Activated CD8-positive, alpha-beta T cell treated with anti-CD3 and anti-CD28 coated beads, Interleukin-2, amount 10 ng/mL, durations not matched to agents 7 days and 5 days (primary cell): ENCODE measurements at regions of chr11 and their contacts with region 1.

Region 1: DNA sequence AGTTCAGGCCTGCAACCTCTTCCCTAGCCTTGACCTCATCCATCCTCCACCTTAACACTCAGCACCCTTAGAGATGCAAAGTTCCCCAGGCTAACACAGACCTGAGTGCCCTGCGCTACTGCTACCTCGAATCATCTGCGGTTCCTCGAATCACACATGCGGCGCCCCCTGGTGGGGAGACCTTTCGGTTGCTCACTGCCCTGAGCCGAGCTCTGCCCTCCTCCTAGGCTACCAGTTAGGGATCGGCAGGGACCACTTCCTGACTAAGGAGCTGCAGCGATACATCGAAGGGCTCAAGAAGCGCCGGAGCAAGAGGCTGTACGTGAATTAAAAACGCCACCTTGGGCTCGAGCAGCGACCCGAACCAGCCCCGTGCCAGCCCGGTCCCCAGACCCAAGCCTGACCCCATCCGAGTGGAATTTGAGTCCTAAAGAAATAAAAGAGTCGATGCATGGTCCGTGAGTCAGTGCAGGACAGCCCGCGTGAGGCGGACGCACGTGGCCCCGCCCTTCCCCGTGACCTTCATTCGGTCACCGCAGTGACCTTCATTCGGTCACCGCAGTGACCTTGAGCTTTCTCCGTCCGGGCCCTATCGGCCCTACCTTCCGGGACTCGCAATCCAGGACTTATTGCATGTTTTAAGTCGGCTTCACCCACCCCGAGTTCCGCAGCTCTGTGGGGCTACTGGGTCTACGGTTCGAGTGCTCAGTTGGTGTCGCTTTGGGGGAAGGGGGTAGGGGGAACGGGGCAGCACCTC is 830 bp upstream of the ESRRA start:
- DNase-seq: peak; percentile 97
- ATAC-seq: peak; percentile 45
- H3K4me3 Mint-ChIP-seq: peak overlapping the region; percentile 88
- H3K27ac Mint-ChIP-seq: peak overlapping the region; percentile 99
- H3K4me1 Mint-ChIP-seq: peaks cover 52% of the 10 kb centered on the region
- H3K27me3 Mint-ChIP-seq: peaks cover 15% of the 10 kb centered on the region

Region 2: GRCh38 chr11:64185816-64186498 is 118.5 kb before region 1 on chr11 and contains the start of gene STIP1:
- CTCF ChIA-PET with region 1: interaction called, 14 read pairs
- POLR2A ChIA-PET with region 1: interaction called, 14 read pairs
- DNase-seq: peak; percentile 99
- ATAC-seq: peak; percentile 92
- H3K4me3 Mint-ChIP-seq: peak within 1 kb of the TSS; percentile 93
- H3K27ac Mint-ChIP-seq: peak within 1 kb of the TSS; percentile 98
- H3K4me1 Mint-ChIP-seq: peaks cover 53% of the 10 kb centered on the region
- H3K27me3 Mint-ChIP-seq: no peaks in the 10 kb centered on the region
- total RNA-seq, gene STIP1: 335 to 340 TPM

Region 3: GRCh38 chr11:64225612-64226506 is 78.6 kb before region 1 on chr11 and contains the starts of genes NUDT22 and TRPT1:
- CTCF ChIA-PET with region 1: interaction called, 12 read pairs
- POLR2A ChIA-PET with region 1: interaction called, 3 read pairs
- DNase-seq: peak; percentile 95
- ATAC-seq: peak; percentile 68
- H3K4me3 Mint-ChIP-seq: peak within 1 kb of the TSS; percentile 88
- H3K27ac Mint-ChIP-seq: peak within 1 kb of the TSS; percentile 91
- H3K4me1 Mint-ChIP-seq: peaks cover 42% of the 10 kb centered on the region
- H3K27me3 Mint-ChIP-seq: no peaks in the 10 kb centered on the region
- total RNA-seq, gene NUDT22: 86.7 to 91.6 TPM
- total RNA-seq, gene TRPT1: 37.8 to 44.8 TPM

Region 4: GRCh38 chr11:64246871-64247728 is 57.4 kb before region 1 on chr11 and contains the start of gene PPP1R14B:
- CTCF ChIA-PET with region 1: interaction called, 27 read pairs
- POLR2A ChIA-PET with region 1: interaction called, 5 read pairs
- DNase-seq: peak; percentile 85
- ATAC-seq: peak; percentile 61
- H3K4me3 Mint-ChIP-seq: peak within 1 kb of the TSS; percentile 88
- H3K27ac Mint-ChIP-seq: peak within 1 kb of the TSS; percentile 85
- H3K4me1 Mint-ChIP-seq: peaks cover 53% of the 10 kb centered on the region
- H3K27me3 Mint-ChIP-seq: no peaks in the 10 kb centered on the region
- total RNA-seq, gene PPP1R14B: 178 to 197 TPM

Region 5: DNA sequence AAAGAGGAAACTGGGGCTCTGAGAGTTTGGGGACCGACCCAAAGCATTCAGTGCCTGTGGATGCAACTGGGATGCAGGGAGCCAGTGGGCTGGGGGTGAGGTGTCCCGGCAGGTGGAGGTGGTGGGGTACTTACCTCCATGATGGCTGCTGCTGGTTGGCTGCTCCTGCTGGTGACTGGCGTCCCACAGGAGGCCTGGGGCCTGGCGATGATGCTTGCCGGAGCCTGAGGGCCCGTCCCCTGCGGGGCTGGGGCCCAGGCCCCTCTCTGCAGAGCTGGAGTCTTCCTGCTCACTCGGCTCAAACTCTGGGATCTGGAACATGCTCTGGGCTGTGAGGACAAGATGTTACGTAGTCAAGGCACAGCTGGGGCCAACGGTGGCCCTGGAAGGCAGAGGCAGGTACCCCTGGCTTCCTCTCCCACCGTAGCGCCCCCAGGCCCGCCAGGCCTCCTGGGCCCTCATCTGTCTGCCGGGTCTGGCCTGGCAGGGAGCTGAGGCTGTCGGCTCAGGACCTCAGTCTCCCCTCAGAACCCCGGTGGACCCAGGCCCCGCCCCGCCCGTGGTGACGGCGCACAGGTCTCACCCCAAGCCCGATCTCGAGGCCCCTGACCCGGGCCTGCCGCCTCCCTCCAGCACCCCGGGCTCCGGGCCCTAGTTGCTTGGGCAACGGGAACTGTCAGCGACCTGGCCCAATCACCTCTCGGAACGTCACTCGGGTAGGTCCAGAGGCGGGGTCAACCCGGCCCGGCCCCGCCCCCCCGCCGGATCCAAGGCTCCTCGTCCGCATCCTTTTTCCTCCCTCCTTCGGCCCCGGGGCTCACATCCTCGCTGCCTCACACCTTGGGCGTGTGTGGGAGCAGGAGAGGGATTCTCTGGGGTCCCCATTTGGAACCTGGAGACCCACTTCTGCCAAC is 20.2 kb before region 1 on chr11 and contains the start of gene BAD:
- CTCF ChIA-PET with region 1: interaction called, 148 read pairs
- POLR2A ChIA-PET with region 1: interaction called, 18 read pairs
- DNase-seq: peak; percentile 95
- ATAC-seq: peak; percentile 86
- H3K4me3 Mint-ChIP-seq: peak within 1 kb of the TSS; percentile 81
- H3K27ac Mint-ChIP-seq: peak within 1 kb of the TSS; percentile 89
- H3K4me1 Mint-ChIP-seq: peaks cover 25% of the 10 kb centered on the region
- H3K27me3 Mint-ChIP-seq: no peaks in the 10 kb centered on the region
- total RNA-seq, gene BAD: 38.3 to 43.9 TPM

Region 6: DNA sequence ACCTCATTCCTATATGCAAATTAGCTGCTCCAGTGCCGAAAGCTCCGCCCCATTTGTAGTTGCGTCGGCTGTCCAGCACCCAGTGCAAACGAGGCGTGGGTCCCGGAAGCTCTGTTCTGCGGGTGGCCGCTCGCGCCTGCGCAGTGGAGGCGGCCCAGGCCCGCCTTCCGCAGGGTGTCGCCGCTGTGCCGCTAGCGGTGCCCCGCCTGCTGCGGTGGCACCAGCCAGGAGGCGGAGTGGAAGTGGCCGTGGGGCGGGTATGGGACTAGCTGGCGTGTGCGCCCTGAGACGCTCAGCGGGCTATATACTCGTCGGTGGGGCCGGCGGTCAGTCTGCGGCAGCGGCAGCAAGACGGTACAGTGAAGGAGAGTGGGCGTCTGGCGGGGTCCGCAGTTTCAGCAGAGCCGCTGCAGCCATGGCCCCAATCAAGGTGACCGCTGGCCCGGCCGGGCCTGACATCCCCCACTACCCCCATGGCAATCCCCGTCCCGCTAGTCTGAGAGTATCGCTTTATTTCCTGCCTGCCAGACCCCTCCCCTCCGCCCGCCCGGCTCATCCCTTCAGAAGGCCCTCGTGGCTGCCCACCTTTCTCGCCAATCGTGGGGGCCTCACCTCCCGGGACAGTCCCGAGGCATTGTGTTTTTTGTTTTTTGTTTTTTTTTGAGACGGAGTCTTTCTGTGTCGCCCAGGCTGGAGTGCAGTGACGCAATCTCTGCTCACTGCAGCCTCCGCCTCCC is 13.6 kb after region 1 on chr11 and contains the start of gene PRDX5:
- CTCF ChIA-PET with region 1: interaction called, 65 read pairs
- POLR2A ChIA-PET with region 1: interaction called, 39 read pairs
- DNase-seq: peak; percentile 96
- ATAC-seq: peak; percentile 80
- H3K4me3 Mint-ChIP-seq: peak within 1 kb of the TSS; percentile 89
- H3K27ac Mint-ChIP-seq: peak within 1 kb of the TSS; percentile 100
- H3K4me1 Mint-ChIP-seq: peaks cover 47% of the 10 kb centered on the region
- H3K27me3 Mint-ChIP-seq: no peaks in the 10 kb centered on the region
- total RNA-seq, gene PRDX5: 102 to 106 TPM

Region 7: DNA sequence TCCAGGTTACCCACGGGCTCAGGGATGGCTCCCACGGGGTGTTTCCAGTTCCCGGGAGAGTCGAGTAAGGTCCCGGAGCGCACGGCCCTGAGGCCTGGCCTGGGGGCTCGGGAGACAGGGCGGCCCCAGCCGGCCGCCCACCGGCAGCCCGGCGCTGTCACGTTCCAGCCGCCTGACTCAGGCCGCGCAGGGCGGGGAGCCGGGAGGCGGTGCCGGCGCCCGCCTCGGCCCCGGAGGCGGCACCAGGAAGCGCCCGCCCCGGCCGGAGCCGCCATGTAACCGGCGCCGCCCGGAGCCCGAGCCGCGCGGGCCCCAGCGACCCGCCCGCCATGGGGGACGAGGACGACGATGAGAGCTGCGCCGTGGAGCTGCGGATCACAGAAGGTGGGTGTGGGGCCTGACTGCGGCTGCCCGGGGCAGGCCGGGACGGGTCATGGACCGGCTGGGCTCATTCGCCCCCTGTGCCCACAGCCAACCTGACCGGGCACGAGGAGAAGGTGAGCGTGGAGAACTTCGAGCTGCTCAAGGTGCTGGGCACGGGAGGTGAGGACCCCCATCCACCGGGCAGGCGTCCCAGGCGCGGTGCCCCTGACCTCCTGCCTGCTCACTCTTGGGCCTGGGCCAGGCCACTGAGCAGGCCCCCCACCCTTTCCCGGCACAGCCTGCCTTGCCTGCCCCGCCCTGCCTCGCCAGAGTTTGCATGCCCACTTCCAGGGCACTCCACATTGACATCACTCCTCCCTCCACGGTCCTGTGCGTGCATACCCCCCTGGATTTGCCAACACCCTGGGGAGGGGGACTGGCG is 54.6 kb after region 1 on chr11 and contains the start of gene RPS6KA4:
- CTCF ChIA-PET with region 1: interaction called, 19 read pairs
- POLR2A ChIA-PET with region 1: no interaction called
- DNase-seq: peak; percentile 51
- ATAC-seq: peak; percentile 87
- H3K4me3 Mint-ChIP-seq: peak within 1 kb of the TSS; percentile 82
- H3K27ac Mint-ChIP-seq: peak within 1 kb of the TSS; percentile 79
- H3K4me1 Mint-ChIP-seq: peaks cover 51% of the 10 kb centered on the region
- H3K27me3 Mint-ChIP-seq: no peaks in the 10 kb centered on the region
- total RNA-seq, gene RPS6KA4: 39.0 to 42.3 TPM

Region 8: GRCh38 chr11:64608046-64608445 is 303.6 kb after region 1 on chr11:
- CTCF ChIA-PET with region 1: no interaction called
- POLR2A ChIA-PET with region 1: no interaction called
- DNase-seq: no peak
- ATAC-seq: no peak
- H3K4me3 Mint-ChIP-seq: no peak overlapping the region
- H3K27ac Mint-ChIP-seq: no peak overlapping the region
- H3K4me1 Mint-ChIP-seq: peaks cover 42% of the 10 kb centered on the region
- H3K27me3 Mint-ChIP-seq: no peaks in the 10 kb centered on the region